B cell (primary cell): ENCODE measurements at regions of chr2 and their contacts with region 1.

Region 1: GRCh38 chr2:240998120-240998994 is at the start of gene SNED1:
- DNase-seq: peak; percentile 76
- ATAC-seq: peak; percentile 88
- H3K4me3 ChIP-seq: peak within 1 kb of the TSS in 4 of 5 experiments; percentile 17 to 46 (median 36)
- H3K4me3 Mint-ChIP-seq: peak within 1 kb of the TSS; percentile 74
- H3K27ac ChIP-seq: no peak within 1 kb of the TSS
- H3K27ac Mint-ChIP-seq: no peak within 1 kb of the TSS
- H3K4me1 ChIP-seq: peaks cover 7 to 8% of the 10 kb centered on the region in 2 donors
- H3K4me1 Mint-ChIP-seq: peaks cover 11% of the 10 kb centered on the region
- H3K27me3 ChIP-seq: peaks cover 0 to 37% (median 8%) of the 10 kb centered on the region in 4 experiments
- H3K27me3 Mint-ChIP-seq: peaks cover 33% of the 10 kb centered on the region
- CTCF ChIP-seq: no peak
- total RNA-seq, gene SNED1: 336 and 346 TPM in 2 replicates

Region 2: DNA sequence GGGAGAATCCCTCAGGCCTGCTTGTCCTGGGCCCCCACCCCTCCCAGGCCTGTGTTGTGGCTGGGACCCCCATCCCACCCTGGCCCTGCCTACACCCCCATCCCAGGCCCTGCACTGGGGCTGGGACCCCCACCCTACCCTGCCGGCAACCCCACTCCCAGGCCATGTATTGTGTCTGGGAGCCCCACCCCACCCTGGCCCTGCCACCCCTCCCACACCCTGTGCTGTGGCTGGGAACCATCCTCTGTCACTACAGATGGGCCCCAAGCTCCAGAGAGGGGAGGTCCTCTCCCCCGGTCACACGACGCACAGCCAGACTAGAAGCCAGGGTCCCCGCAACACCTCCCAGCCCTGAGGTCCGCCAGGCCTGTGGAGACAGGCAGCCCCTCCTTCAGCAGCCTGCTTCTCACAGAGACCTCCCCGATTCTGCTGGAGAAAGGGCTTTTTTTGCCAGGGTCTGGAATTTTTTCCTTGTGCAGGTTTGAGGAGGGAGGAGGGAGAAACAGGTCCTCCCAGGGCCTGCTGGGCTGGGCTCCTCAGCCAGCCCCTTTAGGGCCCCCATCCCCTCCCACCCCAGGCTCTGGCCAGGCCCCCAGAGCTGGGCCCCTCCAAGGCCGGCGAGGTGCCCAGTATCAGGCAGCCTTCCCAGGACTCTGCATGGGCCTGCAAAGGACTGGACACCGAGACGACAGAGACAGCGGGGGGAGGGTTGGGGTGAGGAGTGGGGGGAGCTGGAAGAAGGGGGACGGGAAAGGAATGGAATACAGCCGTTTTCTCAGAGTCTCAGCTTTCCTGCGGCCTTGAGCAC is 206.3 kb before region 1 on chr2:
- CTCF ChIA-PET with region 1: no interaction called
- POLR2A ChIA-PET with region 1: no interaction called
- intact Hi-C with region 1: no loop called
- DNase-seq: no peak
- ATAC-seq: no peak
- H3K4me3 ChIP-seq: no peak overlapping the region
- H3K4me3 Mint-ChIP-seq: no peak overlapping the region
- H3K27ac ChIP-seq: no peak overlapping the region
- H3K27ac Mint-ChIP-seq: no peak overlapping the region
- H3K4me1 ChIP-seq: no peaks in the 10 kb centered on the region
- H3K4me1 Mint-ChIP-seq: no peaks in the 10 kb centered on the region
- H3K27me3 ChIP-seq: peaks cover 0 to 2% (median 0%) of the 10 kb centered on the region in 4 experiments
- H3K27me3 Mint-ChIP-seq: peaks cover 17% of the 10 kb centered on the region
- CTCF ChIP-seq: no peak

Region 3: GRCh38 chr2:241064008-241064801 is 65.8 kb after region 1 on chr2:
- CTCF ChIA-PET with region 1: no interaction called
- POLR2A ChIA-PET with region 1: no interaction called
- intact Hi-C with region 1: loop called (anchors 5 kb)
- DNase-seq: peak; percentile 58
- ATAC-seq: peak; percentile 65
- H3K4me3 ChIP-seq: peak overlapping the region in 2 of 5 experiments; percentile 36 to 38
- H3K4me3 Mint-ChIP-seq: peak overlapping the region; percentile 63
- H3K27ac ChIP-seq: no peak overlapping the region
- H3K27ac Mint-ChIP-seq: no peak overlapping the region
- H3K4me1 ChIP-seq: peaks cover 3 to 9% of the 10 kb centered on the region in 2 donors
- H3K4me1 Mint-ChIP-seq: peaks cover 4% of the 10 kb centered on the region
- H3K27me3 ChIP-seq: peaks cover 0 to 6% (median 0%) of the 10 kb centered on the region in 4 experiments
- H3K27me3 Mint-ChIP-seq: no peaks in the 10 kb centered on the region
- CTCF ChIP-seq: no peak

Region 4: DNA sequence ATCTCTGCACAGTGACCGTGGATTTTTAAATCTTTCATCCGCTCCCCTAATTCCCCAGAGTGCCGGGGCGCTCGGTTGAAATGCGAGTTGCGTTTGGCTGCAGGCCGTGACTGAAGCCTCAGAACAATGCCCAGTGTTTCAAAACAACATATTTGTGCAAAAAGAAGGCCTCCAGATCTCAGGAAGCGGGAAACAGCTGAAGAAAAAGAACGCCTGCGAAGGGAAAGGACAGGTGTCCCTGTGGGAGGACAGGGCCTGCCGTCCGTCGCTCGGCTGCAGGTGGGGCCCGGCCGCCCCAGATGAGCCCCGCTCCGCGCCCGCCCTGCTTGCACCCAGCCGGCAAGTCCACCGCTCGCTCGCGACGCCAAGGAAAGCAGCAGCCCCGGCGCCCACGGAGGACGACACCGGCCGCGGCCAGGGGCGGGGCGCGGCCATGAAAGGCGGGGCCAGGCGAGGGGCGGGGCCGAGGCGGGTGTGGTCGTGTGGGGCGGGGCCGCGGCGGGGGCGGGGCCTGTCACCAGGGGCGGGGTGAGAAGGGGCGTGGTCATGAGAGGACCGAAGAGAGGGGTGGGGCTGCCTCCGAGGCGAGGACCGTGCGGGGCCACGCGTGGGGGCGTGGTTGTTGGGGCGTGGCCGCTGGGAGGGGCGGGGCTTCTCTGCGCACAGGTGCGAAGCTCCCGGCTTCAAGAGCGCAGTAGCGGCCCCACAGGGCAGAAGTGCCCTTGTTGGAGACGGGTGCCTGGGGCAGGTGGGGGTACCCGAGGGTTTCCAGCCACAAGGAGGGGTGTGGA is 542.6 kb after region 1 on chr2:
- CTCF ChIA-PET with region 1: no interaction called
- POLR2A ChIA-PET with region 1: no interaction called
- intact Hi-C with region 1: no loop called
- DNase-seq: peak; percentile 75
- ATAC-seq: peak; percentile 92
- H3K4me3 ChIP-seq: peak overlapping the region in 3 of 5 experiments; percentile 33 to 50 (median 49)
- H3K4me3 Mint-ChIP-seq: peak overlapping the region; percentile 82
- H3K27ac ChIP-seq: no peak overlapping the region
- H3K27ac Mint-ChIP-seq: peak overlapping the region; percentile 38
- H3K4me1 ChIP-seq: peaks cover 12 to 13% of the 10 kb centered on the region in 2 donors
- H3K4me1 Mint-ChIP-seq: peaks cover 3% of the 10 kb centered on the region
- H3K27me3 ChIP-seq: peaks cover 0 to 49% (median 18%) of the 10 kb centered on the region in 4 experiments
- H3K27me3 Mint-ChIP-seq: peaks cover 19% of the 10 kb centered on the region
- CTCF ChIP-seq: no peak